GM12878 (cell line): ENCODE measurements at regions of chr5 and their contacts with region 1.

Region 1: GRCh38 chr5:10701567-10702039 is 59.4 kb downstream of the DAP start:
- DNase-seq: no peak
- ATAC-seq: no peak
- H3K4me3 ChIP-seq: no peak overlapping the region
- H3K27ac ChIP-seq: no peak overlapping the region
- H3K4me1 ChIP-seq: peaks cover 44% of the 10 kb centered on the region
- H3K27me3 ChIP-seq: no peaks in the 10 kb centered on the region
- CTCF ChIP-seq: peak; percentile 39 to 66 (median 53); a peak in 5 of 6 replicates
- EP300 ChIP-seq: no peak
- POLR2A ChIP-seq: no peak
- RAD21 ChIP-seq: peak; percentile 47; the same call in 1 of the 2 replicates

Region 2: GRCh38 chr5:10689391-10690081 is 12.1 kb before region 1 on chr5:
- CTCF ChIA-PET with region 1: interaction called, 20 read pairs
- POLR2A ChIA-PET with region 1: no interaction called
- RAD21 ChIA-PET with region 1: interaction called, 4 read pairs
- SMC1A ChIA-PET with region 1: interaction called, 13 read pairs
- in situ Hi-C with region 1: no loop called
- intact Hi-C with region 1: no loop called
- DNase-seq: no peak
- ATAC-seq: peak; percentile 75
- H3K4me3 ChIP-seq: no peak overlapping the region
- H3K27ac ChIP-seq: no peak overlapping the region
- H3K4me1 ChIP-seq: peaks cover 19% of the 10 kb centered on the region
- H3K27me3 ChIP-seq: no peaks in the 10 kb centered on the region
- CTCF ChIP-seq: peak; percentile 36 to 79 (median 67); a peak in 5 of 6 replicates
- EP300 ChIP-seq: no peak
- POLR2A ChIP-seq: no peak
- RAD21 ChIP-seq: peak; percentile 76

Region 3: DNA sequence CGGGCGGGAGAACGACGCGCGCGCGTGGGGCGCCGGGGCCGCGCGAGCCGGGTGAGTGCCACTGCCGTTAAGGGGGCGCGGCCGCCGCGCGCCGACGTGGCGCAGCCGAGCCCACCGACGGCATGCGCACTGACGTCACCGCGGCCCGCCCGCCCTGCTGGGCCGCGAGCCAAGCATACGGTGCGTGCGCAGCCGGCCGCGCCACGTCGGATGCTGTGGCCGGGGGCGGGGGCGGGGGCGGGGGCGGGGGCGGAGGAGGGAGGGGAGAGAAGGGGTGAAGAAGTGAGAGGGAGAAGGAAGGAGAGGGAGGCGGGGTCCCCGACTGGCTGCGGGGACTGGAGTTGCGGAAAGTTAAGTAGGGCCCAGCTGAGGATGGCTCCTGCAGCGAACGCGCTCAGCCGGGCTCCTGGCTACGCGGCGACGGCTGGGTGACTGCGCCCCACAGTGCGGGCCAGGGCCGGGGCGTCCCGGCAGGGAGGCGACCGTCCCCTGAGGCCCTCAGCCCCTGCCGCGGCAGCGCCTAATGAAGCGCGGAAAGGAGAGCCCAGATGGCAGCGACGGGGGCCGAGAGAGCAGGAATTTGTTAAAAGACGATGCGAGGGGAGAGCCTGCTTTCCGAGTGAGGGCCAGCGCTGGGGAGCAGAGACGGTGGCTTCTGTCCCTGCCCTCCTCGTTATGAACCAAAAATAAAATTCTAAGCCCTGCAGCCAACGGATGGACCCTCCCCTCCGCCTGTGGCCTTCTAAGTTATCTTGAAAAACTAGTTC is 59.7 kb after region 1 on chr5 and contains the start of gene DAP:
- CTCF ChIA-PET with region 1: interaction called, 7 read pairs
- POLR2A ChIA-PET with region 1: interaction called, 4 read pairs
- RAD21 ChIA-PET with region 1: interaction called, 12 read pairs
- SMC1A ChIA-PET with region 1: no interaction called
- in situ Hi-C with region 1: no loop called
- intact Hi-C with region 1: loop called (anchors 2 kb)
- DNase-seq: peak; percentile 63
- ATAC-seq: peak; percentile 71
- H3K4me3 ChIP-seq: peak within 1 kb of the TSS; percentile 91
- H3K27ac ChIP-seq: peak within 1 kb of the TSS; percentile 82
- H3K4me1 ChIP-seq: peaks cover 13% of the 10 kb centered on the region
- H3K27me3 ChIP-seq: no peaks in the 10 kb centered on the region
- CTCF ChIP-seq: no peak
- EP300 ChIP-seq: no peak
- POLR2A ChIP-seq: peak; percentile 87
- RAD21 ChIP-seq: no peak
- polyA plus RNA-seq, gene DAP: 12.9 to 18.1 TPM

Region 4: DNA sequence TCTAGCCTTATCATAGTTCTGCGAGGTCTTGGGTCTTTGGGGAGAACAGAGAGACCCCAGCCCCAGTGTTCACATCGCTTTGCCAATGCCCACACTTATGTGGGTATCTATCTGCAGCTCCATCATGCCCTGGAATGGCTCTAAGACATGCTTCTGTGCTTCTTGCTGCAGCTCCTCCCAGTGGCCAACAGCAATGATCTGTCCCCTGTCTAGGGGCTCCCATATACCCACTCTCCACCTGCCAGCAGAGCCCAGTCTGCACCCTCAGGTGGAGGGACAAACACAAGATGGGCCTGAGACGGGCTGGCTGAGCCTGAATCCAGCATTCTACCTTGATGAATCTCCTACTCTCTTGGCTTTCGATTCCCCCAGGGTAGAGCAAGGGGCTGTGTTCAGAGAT is 74.0 kb after region 1 on chr5:
- CTCF ChIA-PET with region 1: interaction called, 26 read pairs
- POLR2A ChIA-PET with region 1: no interaction called
- RAD21 ChIA-PET with region 1: interaction called, 12 read pairs
- SMC1A ChIA-PET with region 1: interaction called, 10 read pairs
- in situ Hi-C with region 1: no loop called
- intact Hi-C with region 1: no loop called
- DNase-seq: no peak
- ATAC-seq: peak; percentile 83
- H3K4me3 ChIP-seq: no peak overlapping the region
- H3K27ac ChIP-seq: no peak overlapping the region
- H3K4me1 ChIP-seq: no peaks in the 10 kb centered on the region
- H3K27me3 ChIP-seq: no peaks in the 10 kb centered on the region; a peak in 1 of 4 replicates
- CTCF ChIP-seq: peak; percentile 35 to 42 (median 35); a peak in 5 of 6 replicates
- EP300 ChIP-seq: no peak
- POLR2A ChIP-seq: no peak
- RAD21 ChIP-seq: no peak; the same call in 1 of the 2 replicates

Region 5: GRCh38 chr5:11037080-11037479 is 335.5 kb after region 1 on chr5:
- CTCF ChIA-PET with region 1: no interaction called
- POLR2A ChIA-PET with region 1: no interaction called
- RAD21 ChIA-PET with region 1: interaction called, 3 read pairs
- SMC1A ChIA-PET with region 1: no interaction called
- in situ Hi-C with region 1: no loop called
- intact Hi-C with region 1: loop called (anchors 5 kb)
- DNase-seq: no peak
- ATAC-seq: peak; percentile 83
- H3K4me3 ChIP-seq: no peak overlapping the region
- H3K27ac ChIP-seq: no peak overlapping the region
- H3K4me1 ChIP-seq: no peaks in the 10 kb centered on the region
- H3K27me3 ChIP-seq: no peaks in the 10 kb centered on the region
- CTCF ChIP-seq: no peak
- EP300 ChIP-seq: no peak
- POLR2A ChIP-seq: no peak
- RAD21 ChIP-seq: no peak